Activated CD4-positive, alpha-beta T cell treated with anti-CD3 and anti-CD28 coated beads for 36 hours (primary cell): ENCODE measurements at regions of chr2 and their contacts with region 1.

Region 1: DNA sequence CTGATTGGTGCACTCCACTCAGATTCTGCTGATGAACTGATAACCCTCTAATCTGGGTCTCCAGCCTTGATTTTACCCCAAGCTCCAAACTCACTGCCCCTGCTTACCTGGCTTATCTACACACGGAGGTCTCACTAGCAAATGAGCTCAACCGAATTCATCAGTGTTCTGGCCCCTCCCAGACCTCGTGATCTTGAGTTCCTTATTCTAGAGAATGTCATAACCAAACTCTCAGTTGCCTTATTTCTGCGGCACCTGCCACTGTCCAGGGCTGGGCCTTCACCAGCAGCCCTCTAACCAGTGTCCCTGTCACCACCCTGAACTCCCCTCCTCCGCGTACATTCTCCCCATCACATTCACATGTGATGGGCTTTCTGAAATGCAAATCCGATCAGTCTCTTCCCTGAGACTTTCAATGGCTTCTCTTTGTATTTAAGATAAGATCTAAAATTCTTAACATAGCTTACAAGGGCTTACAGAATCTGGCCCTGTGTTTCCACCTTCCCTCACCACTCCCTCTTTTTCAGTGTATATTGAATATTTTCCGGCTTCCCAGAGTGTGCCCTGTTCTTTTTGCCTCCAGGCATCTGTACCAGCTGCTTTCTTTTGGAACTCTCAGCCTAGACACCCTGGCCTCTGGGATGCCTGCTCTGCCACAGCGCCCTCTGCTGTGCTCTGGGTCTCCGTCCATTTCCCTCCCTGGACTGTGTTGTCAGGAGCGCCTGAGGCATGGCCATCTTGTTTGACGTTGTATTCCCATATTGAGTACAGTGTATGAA is 31.1 kb downstream of the NAB1 start:
- DNase-seq: peak; percentile 75
- ATAC-seq: no peak
- H3K4me3 Mint-ChIP-seq: peak overlapping the region; percentile 36
- H3K27ac Mint-ChIP-seq: peak overlapping the region; percentile 97
- H3K4me1 Mint-ChIP-seq: peaks cover 56% of the 10 kb centered on the region
- H3K27me3 Mint-ChIP-seq: no peaks in the 10 kb centered on the region

Region 2: GRCh38 chr2:190534310-190535120 is 145.5 kb before region 1 on chr2 and contains the start of gene NEMP2:
- CTCF ChIA-PET with region 1: interaction called, 5 read pairs
- POLR2A ChIA-PET with region 1: interaction called, 10 read pairs
- intact Hi-C with region 1: loop called (anchors 1 to 2 kb)
- DNase-seq: peak; percentile 87
- ATAC-seq: peak; percentile 70
- H3K4me3 Mint-ChIP-seq: peak within 1 kb of the TSS; percentile 95
- H3K27ac Mint-ChIP-seq: peak within 1 kb of the TSS; percentile 98
- H3K4me1 Mint-ChIP-seq: peaks cover 52% of the 10 kb centered on the region
- H3K27me3 Mint-ChIP-seq: no peaks in the 10 kb centered on the region
- total RNA-seq, gene NEMP2: 24.6 to 25.1 TPM

Region 3: DNA sequence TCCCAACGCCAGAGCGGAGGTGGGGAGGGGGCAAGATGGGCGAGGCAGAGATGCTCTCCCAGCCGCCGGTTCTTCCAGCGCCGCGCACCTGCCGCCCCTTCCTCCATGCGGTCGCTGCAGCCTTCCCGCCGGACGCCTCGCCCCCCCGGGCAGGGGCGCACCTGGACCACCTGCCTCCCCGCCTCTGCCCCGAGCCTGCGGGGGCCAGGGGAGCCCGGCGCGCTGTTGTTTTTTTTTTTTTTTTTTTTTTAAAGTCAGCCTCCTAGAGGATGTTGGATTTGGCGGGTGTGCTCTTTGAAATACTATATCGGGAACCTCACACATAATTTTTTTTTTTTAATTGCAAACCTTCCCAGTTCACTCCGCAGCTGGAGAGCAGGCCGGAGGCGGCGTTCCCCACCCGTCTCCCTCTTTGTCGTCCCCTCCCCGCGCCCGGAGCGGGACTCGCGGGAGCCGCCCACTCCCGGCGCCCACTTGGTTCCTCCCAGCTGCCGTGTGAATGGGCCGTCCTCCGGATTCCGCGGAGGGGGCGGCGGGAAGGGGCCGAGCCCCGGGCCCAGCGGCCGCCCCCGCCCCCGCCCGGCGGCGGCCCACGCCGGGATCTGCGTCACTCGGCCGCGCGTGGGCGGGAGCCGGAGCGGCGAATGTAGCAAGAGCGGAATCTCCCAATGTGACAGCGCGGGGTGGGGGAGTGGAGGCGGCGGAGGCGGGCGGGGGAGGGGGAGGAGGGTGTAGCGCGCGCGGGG is 31.5 kb before region 1 on chr2:
- CTCF ChIA-PET with region 1: interaction called, 35 read pairs
- POLR2A ChIA-PET with region 1: interaction called, 8 read pairs
- intact Hi-C with region 1: loop called (anchors 1 kb)
- DNase-seq: peak; percentile 88
- ATAC-seq: peak; percentile 54
- H3K4me3 Mint-ChIP-seq: peak overlapping the region; percentile 67
- H3K27ac Mint-ChIP-seq: peak overlapping the region; percentile 81
- H3K4me1 Mint-ChIP-seq: peaks cover 46% of the 10 kb centered on the region
- H3K27me3 Mint-ChIP-seq: no peaks in the 10 kb centered on the region

Region 4: DNA sequence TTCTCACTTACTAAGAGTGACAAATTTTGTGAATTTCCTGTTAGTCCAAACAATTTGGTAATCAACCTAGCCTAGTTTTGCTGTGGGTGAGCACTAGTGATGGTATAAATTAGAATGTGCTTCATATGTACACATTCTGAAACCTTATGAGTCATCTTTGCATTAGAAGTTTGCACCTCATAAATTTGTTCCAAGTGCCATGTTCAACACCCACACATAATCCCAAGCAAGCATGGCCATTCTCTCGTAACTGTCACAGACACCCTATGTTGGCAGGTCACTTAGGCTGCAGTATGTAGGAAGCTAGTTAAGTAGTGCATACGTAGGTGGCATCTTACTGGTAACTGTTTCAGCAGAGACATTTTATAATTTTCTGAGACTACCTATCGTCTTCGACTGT is 15.7 kb after region 1 on chr2:
- CTCF ChIA-PET with region 1: interaction called, 58 read pairs
- POLR2A ChIA-PET with region 1: interaction called, 4 read pairs
- intact Hi-C with region 1: loop called (anchors 1 kb)
- DNase-seq: peak; percentile 52
- ATAC-seq: peak; percentile 85
- H3K4me3 Mint-ChIP-seq: no peak overlapping the region
- H3K27ac Mint-ChIP-seq: peak overlapping the region; percentile 44
- H3K4me1 Mint-ChIP-seq: peaks cover 30% of the 10 kb centered on the region
- H3K27me3 Mint-ChIP-seq: no peaks in the 10 kb centered on the region

Region 5: GRCh38 chr2:190759749-190760213 is 79.8 kb after region 1 on chr2:
- CTCF ChIA-PET with region 1: interaction called, 4 read pairs
- POLR2A ChIA-PET with region 1: interaction called, 6 read pairs
- intact Hi-C with region 1: loop called in 1 of 2 experiments (anchors 1 kb)
- DNase-seq: no peak
- ATAC-seq: no peak
- H3K4me3 Mint-ChIP-seq: peak overlapping the region; percentile 15
- H3K27ac Mint-ChIP-seq: no peak overlapping the region
- H3K4me1 Mint-ChIP-seq: peaks cover 54% of the 10 kb centered on the region
- H3K27me3 Mint-ChIP-seq: no peaks in the 10 kb centered on the region

Region 6: GRCh38 chr2:191020221-191020741 is 340.3 kb after region 1 on chr2:
- CTCF ChIA-PET with region 1: no interaction called
- POLR2A ChIA-PET with region 1: no interaction called
- intact Hi-C with region 1: loop called (anchors 2 to 10 kb)
- DNase-seq: peak; percentile 96
- ATAC-seq: peak; percentile 62
- H3K4me3 Mint-ChIP-seq: no peak overlapping the region
- H3K27ac Mint-ChIP-seq: no peak overlapping the region
- H3K4me1 Mint-ChIP-seq: peaks cover 37% of the 10 kb centered on the region
- H3K27me3 Mint-ChIP-seq: no peaks in the 10 kb centered on the region